ENCODE measurements at regions of chr5 and their contacts with region 1.

Region 1: GRCh38 chr5:150295172-150295634 is 5.6 kb upstream of the CAMK2A start:
- DNase-seq: peak; percentile 93
- H3K4me3 ChIP-seq: no peak overlapping the region
- H3K27ac ChIP-seq: peak overlapping the region; percentile 87
- H3K4me1 ChIP-seq: peaks cover 68% of the 10 kb centered on the region
- H3K27me3 ChIP-seq: no peaks in the 10 kb centered on the region
- CTCF ChIP-seq: no peak

Region 2: GRCh38 chr5:149749481-149750365 is 545.5 kb before region 1 on chr5:
- CTCF ChIA-PET with region 1: no interaction called
- dilution Hi-C with region 1: no loop called
- in situ Hi-C with region 1: no loop called
- intact Hi-C with region 1: no loop called
- DNase-seq: peak; percentile 48
- H3K4me3 ChIP-seq: no peak overlapping the region
- H3K27ac ChIP-seq: no peak overlapping the region
- H3K4me1 ChIP-seq: peaks cover 25% of the 10 kb centered on the region
- H3K27me3 ChIP-seq: no peaks in the 10 kb centered on the region
- CTCF ChIP-seq: no peak

Region 3: GRCh38 chr5:150263801-150264621 is 31.2 kb before region 1 on chr5:
- CTCF ChIA-PET with region 1: no interaction called
- dilution Hi-C with region 1: no loop called
- in situ Hi-C with region 1: no loop called
- intact Hi-C with region 1: loop called (anchors 5 kb)
- DNase-seq: peak; percentile 98
- H3K4me3 ChIP-seq: no peak overlapping the region
- H3K27ac ChIP-seq: no peak overlapping the region
- H3K4me1 ChIP-seq: peaks cover 30% of the 10 kb centered on the region
- H3K27me3 ChIP-seq: no peaks in the 10 kb centered on the region
- CTCF ChIP-seq: no peak

Region 4: DNA sequence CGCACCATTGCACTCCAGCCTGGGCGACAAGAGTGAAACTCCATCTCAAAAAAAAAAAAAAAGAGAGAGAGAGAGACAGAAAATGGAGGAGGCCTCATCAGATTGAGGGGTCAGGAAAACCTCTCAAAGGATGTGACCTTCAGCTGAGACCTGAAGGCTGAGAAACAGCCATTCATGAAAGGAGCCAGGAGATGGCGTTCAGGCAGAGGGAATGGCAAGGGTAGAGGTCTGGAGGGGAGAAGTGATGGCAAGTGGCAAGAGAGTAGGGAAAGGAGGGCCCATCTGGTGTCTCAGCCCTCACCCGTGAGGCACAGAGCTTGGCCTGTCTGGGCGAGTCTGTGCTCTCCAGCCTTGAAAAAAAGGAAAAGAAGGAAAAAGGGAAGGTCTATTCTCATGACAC is 22.7 kb before region 1 on chr5:
- CTCF ChIA-PET with region 1: no interaction called
- dilution Hi-C with region 1: no loop called
- in situ Hi-C with region 1: no loop called
- intact Hi-C with region 1: loop called (anchors 1 kb)
- DNase-seq: peak; percentile 46
- H3K4me3 ChIP-seq: no peak overlapping the region
- H3K27ac ChIP-seq: no peak overlapping the region
- H3K4me1 ChIP-seq: peaks cover 5% of the 10 kb centered on the region
- H3K27me3 ChIP-seq: no peaks in the 10 kb centered on the region
- CTCF ChIP-seq: peak; percentile 53 to 78

Region 5: DNA sequence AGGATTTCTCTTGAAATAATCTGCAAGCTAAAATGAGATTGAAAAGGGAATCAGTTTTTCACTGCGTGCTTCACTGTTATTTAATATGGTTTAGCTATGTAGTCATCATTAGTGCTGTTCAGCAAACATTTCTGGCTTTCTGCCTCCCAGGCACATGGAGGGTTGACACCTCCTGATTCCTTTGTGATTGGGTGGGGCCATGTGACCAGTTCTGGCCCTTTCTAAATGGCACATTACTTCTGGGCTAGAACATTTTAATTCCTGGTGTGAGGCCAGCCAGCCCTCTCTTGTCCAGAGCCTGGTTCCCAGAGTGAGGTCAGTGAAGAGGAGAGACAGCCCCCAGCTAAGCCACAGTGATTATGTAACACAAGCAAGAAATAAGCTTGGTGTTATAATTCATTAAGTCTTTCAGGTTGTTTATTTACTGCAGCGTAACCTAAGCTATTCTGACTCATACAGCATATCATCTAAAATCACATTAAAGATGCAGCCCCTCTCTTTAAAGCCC is 24.9 kb after region 1 on chr5:
- CTCF ChIA-PET with region 1: interaction called, 3 read pairs
- dilution Hi-C with region 1: no loop called
- in situ Hi-C with region 1: no loop called
- intact Hi-C with region 1: loop called (anchors 1 kb)
- DNase-seq: peak; percentile 87
- H3K4me3 ChIP-seq: no peak overlapping the region
- H3K27ac ChIP-seq: peak overlapping the region; percentile 92
- H3K4me1 ChIP-seq: peaks cover 64% of the 10 kb centered on the region
- H3K27me3 ChIP-seq: no peaks in the 10 kb centered on the region
- CTCF ChIP-seq: no peak

Measured in mammary epithelial cell (primary cell).